Lower leg skin (tissue), 4 donors: ENCODE measurements at regions of chr12 and their contacts with region 1.

Region 1: DNA sequence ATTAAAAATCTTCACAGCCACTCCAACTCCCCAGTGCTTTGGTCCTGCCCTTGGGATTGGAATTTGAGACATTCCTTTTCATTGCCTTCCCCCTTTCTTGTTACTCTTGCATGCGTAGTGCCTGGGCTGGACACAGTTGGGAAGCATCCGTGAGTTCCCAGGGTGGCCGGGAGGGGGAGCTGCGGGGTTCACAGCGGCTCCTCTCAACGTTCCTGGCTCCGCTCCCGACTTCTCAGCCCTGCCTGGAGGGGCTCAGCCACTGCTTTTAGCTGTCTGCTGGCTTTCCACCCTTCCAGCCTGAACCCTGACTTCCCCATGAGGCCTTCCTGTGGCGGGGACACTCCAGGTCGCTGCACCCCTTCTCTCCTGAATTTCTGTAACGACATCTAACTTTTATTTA is 3.2 kb downstream of the TEX52 start:
- DNase-seq: peak; percentile 59 to 94
- H3K4me3 ChIP-seq: no peak overlapping the region
- CTCF ChIP-seq: no peak
- POLR2A ChIP-seq: no peak

Region 2: GRCh38 chr12:2944401-2945047 is 90.9 kb after region 1 on chr12:
- intact Hi-C with region 1: loop called (anchors 10 kb)
- DNase-seq: no peak
- H3K4me3 ChIP-seq: no peak overlapping the region
- CTCF ChIP-seq: peak in 1 of 3 donors; percentile 45
- POLR2A ChIP-seq: no peak